Activated CD4-positive, alpha-beta T cell treated with anti-CD3 and anti-CD28 coated beads, Interleukin-2, amount 10 ng/mL, durations not matched to agents 24 days and 14 days (primary cell): ENCODE measurements at regions of chr10 and their contacts with region 1.

Region 1: GRCh38 chr10:8338177-8338766 is 283.8 kb downstream of the GATA3 start:
- DNase-seq: no peak
- H3K4me3 Mint-ChIP-seq: peak overlapping the region; percentile 39
- H3K27ac Mint-ChIP-seq: peak overlapping the region; percentile 91
- H3K4me1 Mint-ChIP-seq: peaks cover 15% of the 10 kb centered on the region
- H3K27me3 Mint-ChIP-seq: peaks cover 10% of the 10 kb centered on the region

Region 2: GRCh38 chr10:8312781-8313180 is 25.5 kb before region 1 on chr10:
- intact Hi-C with region 1: loop called (anchors 1 kb)
- DNase-seq: no peak
- H3K4me3 Mint-ChIP-seq: no peak overlapping the region
- H3K27ac Mint-ChIP-seq: peak overlapping the region; percentile 64
- H3K4me1 Mint-ChIP-seq: peaks cover 34% of the 10 kb centered on the region
- H3K27me3 Mint-ChIP-seq: no peaks in the 10 kb centered on the region

Region 3: DNA sequence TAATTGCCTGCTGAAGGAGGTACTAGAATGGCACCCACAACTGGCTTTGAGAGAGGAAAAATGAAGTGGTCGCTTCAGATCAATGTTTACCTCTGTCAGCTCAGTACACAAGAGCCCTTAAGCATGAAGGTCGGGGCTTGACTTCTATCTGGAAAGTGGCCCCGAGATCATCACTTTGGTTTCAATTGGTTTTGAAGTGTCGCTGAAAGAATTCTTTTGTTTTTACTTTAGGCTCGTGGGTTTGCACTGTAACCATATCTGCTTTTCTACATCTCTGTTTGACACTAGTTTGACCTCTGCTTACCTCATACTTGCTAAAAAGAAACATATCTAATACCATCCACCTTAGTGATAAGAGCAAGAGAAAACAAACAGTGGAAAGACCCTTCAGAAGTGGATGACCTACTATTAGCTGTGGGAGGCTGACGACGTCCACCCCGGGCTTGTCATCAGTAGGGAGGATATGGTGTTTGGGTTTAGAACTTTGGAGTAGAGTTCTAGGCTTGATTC is 78.0 kb after region 1 on chr10:
- intact Hi-C with region 1: loop called (anchors 1 kb)
- DNase-seq: peak; percentile 83
- H3K4me3 Mint-ChIP-seq: peak overlapping the region; percentile 38
- H3K27ac Mint-ChIP-seq: peak overlapping the region; percentile 90
- H3K4me1 Mint-ChIP-seq: peaks cover 29% of the 10 kb centered on the region
- H3K27me3 Mint-ChIP-seq: peaks cover 10% of the 10 kb centered on the region